IMR-90 (cell line): ENCODE measurements at regions of chr6 and their contacts with region 1.

Region 1: GRCh38 chr6:27893059-27893835 is 18.9 kb downstream of the OR2B2 start:
- DNase-seq: peak; percentile 99
- ATAC-seq: peak; percentile 64
- H3K4me3 ChIP-seq: peak overlapping the region; percentile 67
- H3K27ac ChIP-seq: peak overlapping the region; percentile 48
- H3K4me1 ChIP-seq: peaks cover 5% of the 10 kb centered on the region
- H3K27me3 ChIP-seq: no peaks in the 10 kb centered on the region
- CTCF ChIP-seq: no peak
- POLR2A ChIP-seq: peak; percentile 99
- RAD21 ChIP-seq: no peak

Region 2: DNA sequence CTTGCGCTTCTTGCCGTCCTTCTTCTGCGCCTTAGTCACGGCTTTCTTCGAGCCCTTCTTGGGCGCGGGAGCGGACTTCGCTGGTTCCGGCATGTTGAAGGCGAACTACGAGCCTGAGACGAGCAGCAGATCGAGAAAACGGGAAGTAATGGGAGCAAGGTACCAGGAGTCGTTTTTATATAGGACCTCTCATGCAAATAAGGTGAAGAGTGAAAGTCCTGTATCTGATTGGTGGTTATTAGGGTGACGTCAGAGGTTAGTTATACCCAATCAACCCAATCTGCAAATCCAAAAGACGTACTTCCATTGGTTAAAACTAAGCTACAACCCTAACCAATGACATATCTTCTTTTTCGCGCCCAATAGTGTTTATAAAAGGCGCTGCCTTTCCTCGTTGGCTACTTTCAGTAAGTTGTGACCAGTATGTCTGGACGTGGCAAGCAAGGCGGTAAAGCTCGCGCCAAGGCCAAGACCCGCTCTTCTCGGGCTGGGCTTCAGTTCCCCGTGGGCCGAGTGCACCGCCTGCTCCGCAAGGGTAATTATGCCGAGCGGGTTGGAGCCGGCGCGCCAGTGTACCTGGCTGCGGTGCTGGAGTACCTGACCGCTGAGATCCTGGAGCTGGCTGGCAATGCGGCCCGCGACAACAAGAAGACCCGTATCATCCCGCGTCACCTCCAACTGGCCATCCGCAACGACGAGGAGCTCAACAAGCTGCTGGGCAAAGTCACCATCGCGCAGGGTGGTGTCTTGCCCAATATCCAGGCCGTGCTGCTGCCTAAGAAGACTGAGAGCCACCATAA is 746.3 kb before region 1 on chr6:
- CTCF ChIA-PET with region 1: no interaction called
- POLR2A ChIA-PET with region 1: interaction called, 7 read pairs
- dilution Hi-C with region 1: loop called (anchors 25 kb)
- in situ Hi-C with region 1: loop called (anchors 5 kb)
- intact Hi-C with region 1: loop called (anchors 5 kb)
- DNase-seq: peak; percentile 100
- ATAC-seq: peak; percentile 90
- H3K4me3 ChIP-seq: peak overlapping the region; percentile 85
- H3K27ac ChIP-seq: peak overlapping the region; percentile 96
- H3K4me1 ChIP-seq: peaks cover 2% of the 10 kb centered on the region; the same call in 1 of the 2 replicates
- H3K27me3 ChIP-seq: no peaks in the 10 kb centered on the region
- CTCF ChIP-seq: no peak
- POLR2A ChIP-seq: peak; percentile 95
- RAD21 ChIP-seq: no peak

Region 3: DNA sequence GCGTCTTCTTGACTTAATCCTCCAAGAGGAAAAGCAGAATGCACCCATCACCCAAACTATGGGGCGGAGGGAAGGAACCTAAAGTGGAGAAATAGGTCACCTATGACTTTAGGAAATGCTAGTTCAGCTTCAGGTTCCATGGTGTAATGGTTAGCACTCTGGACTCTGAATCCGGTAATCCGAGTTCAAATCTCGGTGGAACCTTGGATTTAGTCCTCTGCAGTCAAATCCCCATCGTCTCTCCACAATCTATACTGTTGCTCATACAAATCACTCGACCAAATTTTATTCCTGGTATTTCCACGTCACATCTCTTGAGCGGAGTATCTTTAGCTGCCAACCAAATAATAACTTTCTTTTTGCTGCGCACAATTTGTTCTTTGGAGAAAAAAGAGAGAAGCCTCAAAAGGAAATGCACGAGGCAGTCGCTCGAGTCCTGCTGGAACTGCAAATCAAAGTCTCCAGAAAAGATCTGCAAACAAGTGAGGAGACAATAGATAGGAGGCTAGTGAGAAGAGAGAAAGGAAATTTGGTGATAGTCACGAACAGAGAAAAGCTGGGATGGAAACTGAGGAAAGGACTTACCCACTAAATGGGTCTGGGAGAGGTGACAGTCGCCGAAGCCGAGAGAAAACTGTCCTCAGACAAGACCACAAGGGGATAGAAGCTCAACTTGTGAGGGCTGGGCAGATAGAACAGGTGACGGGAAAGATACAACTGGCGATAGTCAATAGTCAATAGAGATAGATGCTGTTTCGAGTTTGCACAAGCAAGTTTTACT is 597.8 kb before region 1 on chr6:
- CTCF ChIA-PET with region 1: no interaction called
- POLR2A ChIA-PET with region 1: no interaction called
- dilution Hi-C with region 1: no loop called
- in situ Hi-C with region 1: no loop called
- intact Hi-C with region 1: loop called (anchors 10 kb)
- DNase-seq: peak; percentile 85
- ATAC-seq: peak; percentile 72
- H3K4me3 ChIP-seq: peak overlapping the region; percentile 48
- H3K27ac ChIP-seq: no peak overlapping the region
- H3K4me1 ChIP-seq: no peaks in the 10 kb centered on the region
- H3K27me3 ChIP-seq: peaks cover 9% of the 10 kb centered on the region
- CTCF ChIP-seq: no peak
- POLR2A ChIP-seq: no peak
- RAD21 ChIP-seq: no peak

Region 4: DNA sequence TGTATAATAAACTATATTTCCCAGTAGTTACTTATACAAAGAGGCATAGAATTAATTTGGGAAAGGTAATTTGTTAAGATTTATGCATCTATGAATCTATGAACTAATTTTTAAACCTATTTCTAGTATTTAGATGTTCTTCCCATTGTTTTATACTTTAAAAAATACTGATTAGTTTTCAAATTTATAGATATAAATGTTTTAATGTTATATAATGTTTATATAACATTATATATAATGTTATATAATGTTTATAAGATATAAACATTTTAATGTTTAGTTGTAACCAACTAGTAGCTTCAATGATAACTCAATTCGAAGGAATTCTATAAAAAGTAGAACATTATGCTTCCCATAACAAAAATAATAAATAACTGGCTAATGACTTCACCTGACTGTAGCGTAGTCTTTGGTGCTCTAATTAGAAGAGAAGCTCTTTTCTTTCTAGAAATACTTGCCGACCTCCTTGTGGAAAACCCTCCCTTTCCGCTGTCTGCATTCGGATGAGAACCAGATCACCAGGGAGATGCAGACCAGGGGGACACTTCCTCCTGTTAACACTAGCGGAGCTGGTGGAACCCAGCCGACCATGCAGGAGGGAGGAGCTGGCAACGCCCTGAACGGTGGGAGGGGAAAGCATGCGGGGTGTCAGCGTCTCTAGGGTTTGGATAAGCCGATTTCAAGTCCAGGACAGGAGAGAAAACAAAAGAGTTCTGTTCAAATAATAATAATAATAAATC is 139.4 kb before region 1 on chr6:
- CTCF ChIA-PET with region 1: no interaction called
- POLR2A ChIA-PET with region 1: no interaction called
- dilution Hi-C with region 1: no loop called
- in situ Hi-C with region 1: no loop called
- intact Hi-C with region 1: loop called (anchors 5 kb)
- DNase-seq: peak; percentile 76
- ATAC-seq: peak; percentile 69
- H3K4me3 ChIP-seq: peak overlapping the region; percentile 58
- H3K27ac ChIP-seq: no peak overlapping the region
- H3K4me1 ChIP-seq: no peaks in the 10 kb centered on the region
- H3K27me3 ChIP-seq: peaks cover 7% of the 10 kb centered on the region
- CTCF ChIP-seq: no peak
- POLR2A ChIP-seq: no peak
- RAD21 ChIP-seq: no peak

Region 5: GRCh38 chr6:27838058-27838944 is 54.9 kb before region 1 on chr6:
- CTCF ChIA-PET with region 1: interaction called, 3 read pairs
- POLR2A ChIA-PET with region 1: interaction called, 19 read pairs
- dilution Hi-C with region 1: no loop called
- in situ Hi-C with region 1: no loop called
- intact Hi-C with region 1: loop called (anchors 2 kb)
- DNase-seq: peak; percentile 100
- ATAC-seq: peak; percentile 86
- H3K4me3 ChIP-seq: peak overlapping the region; percentile 63
- H3K27ac ChIP-seq: peak overlapping the region; percentile 88
- H3K4me1 ChIP-seq: no peaks in the 10 kb centered on the region
- H3K27me3 ChIP-seq: no peaks in the 10 kb centered on the region
- CTCF ChIP-seq: no peak
- POLR2A ChIP-seq: peak; percentile 97
- RAD21 ChIP-seq: no peak

Region 6: GRCh38 chr6:28167068-28167467 is 273.8 kb after region 1 on chr6:
- CTCF ChIA-PET with region 1: no interaction called
- POLR2A ChIA-PET with region 1: no interaction called
- dilution Hi-C with region 1: no loop called
- in situ Hi-C with region 1: no loop called
- intact Hi-C with region 1: no loop called
- DNase-seq: peak; percentile 92
- ATAC-seq: peak; percentile 59
- H3K4me3 ChIP-seq: no peak overlapping the region
- H3K27ac ChIP-seq: no peak overlapping the region
- H3K4me1 ChIP-seq: no peaks in the 10 kb centered on the region; the same call in 1 of the 2 replicates
- H3K27me3 ChIP-seq: no peaks in the 10 kb centered on the region
- CTCF ChIP-seq: no peak
- POLR2A ChIP-seq: no peak
- RAD21 ChIP-seq: no peak

Region 7: DNA sequence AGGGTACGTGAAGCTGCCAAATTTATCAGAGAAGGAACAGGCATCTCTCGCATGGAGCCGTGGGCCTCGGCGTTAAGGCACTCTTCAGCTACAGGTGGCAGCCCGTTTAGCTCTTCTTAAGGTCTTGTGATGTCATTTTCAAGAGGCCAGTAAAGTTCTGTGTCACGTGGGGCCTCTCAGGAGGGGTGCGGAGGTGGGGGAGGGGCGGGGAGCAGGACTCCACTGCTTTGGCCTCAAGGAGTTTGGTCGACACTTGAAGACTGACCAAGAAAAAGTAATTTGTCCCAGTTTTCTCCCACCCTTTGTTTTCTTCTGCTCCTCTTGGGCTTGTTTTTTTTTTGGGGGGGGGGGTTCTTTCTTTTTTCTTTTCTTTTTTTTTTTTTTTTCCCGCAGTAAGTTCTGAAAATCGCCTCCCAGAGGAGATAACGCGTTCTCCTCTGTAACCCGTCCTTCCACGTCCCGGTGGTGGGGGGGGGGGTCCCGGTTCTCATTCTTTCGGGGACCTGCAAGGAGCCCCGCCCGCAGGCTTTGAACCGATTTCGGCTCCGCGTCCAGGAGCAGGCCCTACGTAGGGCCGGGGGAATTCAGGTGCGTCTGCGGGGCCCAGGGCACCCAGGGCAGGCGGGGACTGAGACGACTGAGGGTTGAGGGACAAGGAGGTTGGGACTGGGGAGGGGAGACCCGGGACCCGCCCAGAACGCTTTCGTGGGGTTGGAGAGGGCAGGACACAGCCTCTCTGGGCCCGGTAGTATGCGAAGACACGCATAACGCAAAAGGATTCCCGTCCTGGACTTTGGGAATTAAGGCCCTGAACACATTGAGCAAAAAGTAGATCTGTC is 596.3 kb after region 1 on chr6:
- CTCF ChIA-PET with region 1: no interaction called
- POLR2A ChIA-PET with region 1: no interaction called
- dilution Hi-C with region 1: no loop called
- in situ Hi-C with region 1: no loop called
- intact Hi-C with region 1: no loop called
- DNase-seq: peak; percentile 74
- ATAC-seq: peak; percentile 90
- H3K4me3 ChIP-seq: peak overlapping the region; percentile 58
- H3K27ac ChIP-seq: no peak overlapping the region; the same call in 1 of the 2 replicates
- H3K4me1 ChIP-seq: no peaks in the 10 kb centered on the region
- H3K27me3 ChIP-seq: no peaks in the 10 kb centered on the region; the same call in 1 of the 2 replicates
- CTCF ChIP-seq: no peak
- POLR2A ChIP-seq: no peak
- RAD21 ChIP-seq: no peak